Activated CD4-positive, alpha-beta T cell treated with anti-CD3 and anti-CD28 coated beads for 36 hours (primary cell): ENCODE measurements at regions of chr19 and their contacts with region 1.

Region 1: DNA sequence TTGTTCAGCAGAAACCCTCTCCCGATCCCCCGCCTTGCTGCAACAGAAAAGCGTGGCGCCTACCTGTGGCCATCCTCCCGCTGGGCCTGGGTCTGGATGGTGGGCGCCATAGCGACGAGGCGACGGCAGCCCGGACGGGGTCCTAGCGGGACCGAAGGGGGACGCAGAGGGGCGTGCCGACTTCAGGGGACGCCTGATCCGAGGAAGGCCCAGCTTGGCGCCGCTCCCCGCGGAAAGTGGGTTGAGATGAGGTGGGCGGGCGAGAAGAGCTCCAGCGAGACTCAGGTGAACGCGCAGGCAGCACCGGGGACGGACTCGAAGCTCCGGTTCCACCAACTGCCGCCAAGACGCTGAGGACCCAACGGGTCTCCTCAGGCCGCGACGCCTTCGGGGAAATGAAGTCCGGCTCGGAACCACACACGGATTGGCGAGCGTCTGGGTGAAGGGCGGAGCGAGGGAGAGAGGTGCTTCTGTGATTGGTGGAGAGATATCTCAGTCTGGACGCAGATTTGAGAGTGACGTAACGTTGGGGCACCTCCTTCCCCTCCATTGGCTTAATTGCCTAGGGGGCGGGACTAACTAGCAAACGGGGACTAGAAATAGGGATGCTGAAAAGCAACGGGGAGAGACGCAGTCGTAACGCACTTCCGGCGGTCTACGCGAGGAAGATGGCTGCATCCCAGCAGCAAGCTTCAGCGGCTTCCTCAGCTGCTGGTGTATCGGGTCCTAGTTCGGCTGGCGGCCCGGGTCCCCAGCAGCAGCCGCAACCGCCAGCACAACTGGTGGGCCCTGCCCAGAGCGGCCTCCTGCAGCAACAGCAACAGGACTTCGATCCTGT is at the starts of genes MED29 and PAF1:
- DNase-seq: peak; percentile 98
- ATAC-seq: peak; percentile 97
- H3K4me3 Mint-ChIP-seq: peak within 1 kb of the TSS; percentile 99
- H3K27ac Mint-ChIP-seq: peak within 1 kb of the TSS; percentile 98
- H3K4me1 Mint-ChIP-seq: peaks cover 28% of the 10 kb centered on the region
- H3K27me3 Mint-ChIP-seq: no peaks in the 10 kb centered on the region
- total RNA-seq, gene MED29: 24.0 to 34.6 TPM
- total RNA-seq, gene PAF1: 40.4 to 54.2 TPM

Region 2: DNA sequence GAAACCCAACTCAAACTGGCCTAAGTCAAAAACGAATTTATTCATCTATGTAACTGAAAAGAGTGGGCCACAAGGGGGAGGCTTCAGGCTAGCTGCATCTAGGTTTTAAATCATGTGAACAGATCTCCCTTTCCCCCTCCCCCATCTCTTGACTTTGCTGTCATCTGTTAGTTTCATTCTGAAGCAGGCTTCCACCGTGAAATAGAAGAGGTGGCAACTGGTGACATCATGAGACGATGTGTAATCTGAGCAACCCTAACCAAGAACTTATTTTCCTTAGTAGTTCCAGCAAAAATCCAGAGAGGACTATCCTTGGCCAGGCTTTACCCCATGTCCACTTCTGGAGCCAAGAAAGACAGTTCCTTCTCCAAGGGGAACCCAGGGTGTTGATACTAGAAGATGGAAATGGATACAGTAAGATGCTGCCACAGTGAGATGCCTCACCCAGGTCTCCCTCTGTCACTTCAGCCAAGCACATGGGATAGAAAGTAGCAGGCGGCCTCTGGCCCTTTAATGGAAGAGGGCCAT is 39.4 kb before region 1 on chr19:
- CTCF ChIA-PET with region 1: no interaction called
- POLR2A ChIA-PET with region 1: interaction called, 7 read pairs
- intact Hi-C with region 1: loop called (anchors 1 kb)
- DNase-seq: peak; percentile 77
- ATAC-seq: peak; percentile 94
- H3K4me3 Mint-ChIP-seq: no peak overlapping the region
- H3K27ac Mint-ChIP-seq: peak overlapping the region; percentile 89
- H3K4me1 Mint-ChIP-seq: peaks cover 44% of the 10 kb centered on the region
- H3K27me3 Mint-ChIP-seq: no peaks in the 10 kb centered on the region

Region 3: DNA sequence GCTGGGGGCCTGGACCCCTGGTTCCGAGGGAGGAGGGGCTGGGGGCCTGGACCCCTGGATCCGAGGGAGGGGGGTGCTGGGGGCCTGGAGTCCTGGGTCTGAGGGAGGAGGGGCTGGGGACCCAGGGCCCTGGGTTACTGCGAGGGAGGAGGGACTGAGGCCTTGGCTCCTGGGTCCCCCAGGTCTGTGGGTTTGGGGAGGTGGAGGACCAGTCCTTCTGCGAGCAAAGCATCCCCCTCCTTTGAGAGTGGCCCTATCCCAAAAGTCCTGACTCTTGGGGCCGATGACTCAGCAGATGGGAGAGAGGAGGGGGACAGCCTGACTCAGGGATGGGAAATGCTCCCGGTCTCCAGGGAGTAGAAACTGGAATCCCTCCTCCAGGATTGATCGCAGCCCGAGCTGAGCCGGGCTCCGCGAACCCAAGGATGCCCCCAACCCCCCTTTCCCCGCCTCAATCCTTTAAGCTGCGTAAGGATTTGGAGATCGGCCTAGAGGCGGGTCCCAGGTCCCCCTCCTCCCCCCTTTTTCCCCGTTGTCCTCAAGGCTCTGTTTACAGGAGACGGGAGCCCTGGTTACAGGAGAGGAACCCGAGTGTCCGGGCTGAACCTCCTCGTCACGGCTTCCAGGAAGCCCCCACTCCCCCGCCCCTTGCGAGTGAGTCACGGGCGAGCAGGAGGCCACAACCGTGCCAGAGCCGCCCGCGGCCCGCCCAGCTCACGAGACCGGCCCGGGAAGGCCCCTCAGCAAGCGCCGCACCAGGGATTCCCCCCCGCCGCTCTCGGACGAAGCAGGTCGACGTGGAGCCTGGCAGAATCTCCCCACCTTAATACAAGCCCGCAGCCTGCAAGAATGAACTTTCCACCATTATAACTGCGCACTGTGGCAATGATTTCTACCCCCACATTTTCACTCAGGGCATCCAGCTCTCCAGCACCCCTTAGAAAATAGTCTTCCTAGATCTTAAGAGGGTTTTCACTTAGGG is 12.6 kb after region 1 on chr19:
- CTCF ChIA-PET with region 1: interaction called, 34 read pairs
- POLR2A ChIA-PET with region 1: interaction called, 34 read pairs
- intact Hi-C with region 1: no loop called
- DNase-seq: peak; percentile 98
- ATAC-seq: peak; percentile 27
- H3K4me3 Mint-ChIP-seq: peak overlapping the region; percentile 75
- H3K27ac Mint-ChIP-seq: peak overlapping the region; percentile 100
- H3K4me1 Mint-ChIP-seq: peaks cover 64% of the 10 kb centered on the region
- H3K27me3 Mint-ChIP-seq: no peaks in the 10 kb centered on the region

Region 4: GRCh38 chr19:40774916-40775631 is 1384.1 kb after region 1 on chr19 and contains the start of gene MIA:
- CTCF ChIA-PET with region 1: no interaction called
- POLR2A ChIA-PET with region 1: no interaction called
- intact Hi-C with region 1: no loop called
- DNase-seq: no peak
- ATAC-seq: no peak
- H3K4me3 Mint-ChIP-seq: no peak within 1 kb of the TSS
- H3K27ac Mint-ChIP-seq: no peak within 1 kb of the TSS
- H3K4me1 Mint-ChIP-seq: peaks cover 27% of the 10 kb centered on the region
- H3K27me3 Mint-ChIP-seq: no peaks in the 10 kb centered on the region
- total RNA-seq, gene MIA: 0.57 TPM in 1 of 2 experiments, not detected in the other